ENCODE measurements at regions of chr6 and their contacts with region 1.

Region 1: GRCh38 chr6:34284563-34285447 is 36.0 kb upstream of the SMIM29 start:
- DNase-seq: peak; percentile 86

Region 2: DNA sequence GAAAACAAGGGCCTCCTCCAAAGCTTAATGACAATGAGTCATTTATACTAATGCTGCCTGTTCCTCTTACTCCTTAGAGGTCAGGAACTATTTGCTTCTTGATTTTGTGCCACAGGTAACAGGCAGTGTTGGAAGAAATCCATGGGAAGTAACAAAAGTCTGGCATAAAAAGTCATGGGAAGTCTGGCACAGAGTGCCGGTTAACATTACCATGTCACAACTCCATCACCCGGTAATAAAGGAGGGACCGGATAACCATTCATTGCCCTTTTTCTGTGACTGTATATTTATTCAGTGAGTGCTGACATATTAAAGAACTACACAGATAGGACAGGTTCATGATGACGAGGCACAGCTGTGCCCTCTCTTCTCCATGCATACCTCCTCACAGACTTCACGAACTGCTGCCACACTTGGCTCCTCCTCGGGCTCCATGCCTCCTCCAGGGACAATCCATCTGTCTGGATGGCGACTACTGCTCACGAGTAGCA is 56.7 kb after region 1 on chr6:
- intact Hi-C with region 1: loop called (anchors 5 kb)
- DNase-seq: no peak

Measured in cardiac septum (tissue), 1 donor.